Cardiac septum (tissue), 1 donor: ENCODE measurements at regions of chr17 and their contacts with region 1.

Region 1: GRCh38 chr17:57033295-57033694 is 51.8 kb upstream of the AKAP1 start:
- DNase-seq: no peak

Region 2: GRCh38 chr17:57084802-57085447 is 51.6 kb after region 1 on chr17 and contains the start of gene AKAP1:
- intact Hi-C with region 1: loop called (anchors 2 kb)
- DNase-seq: peak; percentile 97
- total RNA-seq, gene AKAP1: 108 TPM